ENCODE measurements at regions of chr16 and their contacts with region 1.

Region 1: DNA sequence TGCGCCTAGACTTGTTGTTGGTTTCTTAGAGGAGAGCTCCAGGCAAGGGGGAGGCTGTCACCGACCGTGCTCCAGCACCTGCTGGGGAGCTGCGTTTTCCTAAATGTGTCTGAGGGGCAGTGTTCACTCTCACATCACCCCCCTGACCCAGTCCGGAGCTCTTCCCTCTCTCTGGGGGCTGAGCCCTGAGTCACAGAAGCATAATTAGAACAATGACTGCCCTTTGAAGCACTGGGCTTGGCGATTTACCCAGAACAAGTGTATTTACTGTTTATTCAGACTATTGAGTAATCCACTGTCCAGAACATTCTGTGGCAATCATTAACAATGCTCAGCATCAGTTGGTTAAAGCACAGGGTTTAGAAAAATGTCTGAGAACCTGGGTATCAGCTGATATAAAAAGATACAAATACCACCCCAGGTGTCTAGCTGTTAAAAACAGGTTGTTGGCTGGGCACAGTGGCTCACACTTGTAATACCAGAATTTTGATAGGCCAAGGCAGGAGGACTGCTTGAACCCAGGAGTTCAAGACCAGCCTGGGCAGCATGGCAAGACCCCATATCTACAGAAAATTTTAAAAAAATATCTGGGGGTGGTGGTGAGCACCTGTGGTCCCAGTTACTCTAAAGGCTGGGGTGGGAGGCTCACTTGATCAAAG is 8.1 kb downstream of the CES4A start:
- DNase-seq: no peak
- H3K4me3 Mint-ChIP-seq: no peak overlapping the region
- H3K27ac Mint-ChIP-seq: no peak overlapping the region
- H3K4me1 Mint-ChIP-seq: peaks cover 24% of the 10 kb centered on the region
- H3K27me3 Mint-ChIP-seq: no peaks in the 10 kb centered on the region

Region 2: GRCh38 chr16:66539623-66540469 is 456.6 kb before region 1 on chr16:
- CTCF ChIA-PET with region 1: no interaction called
- POLR2A ChIA-PET with region 1: no interaction called
- DNase-seq: no peak
- H3K4me3 Mint-ChIP-seq: no peak overlapping the region
- H3K27ac Mint-ChIP-seq: peak overlapping the region; percentile 15
- H3K4me1 Mint-ChIP-seq: peaks cover 20% of the 10 kb centered on the region
- H3K27me3 Mint-ChIP-seq: no peaks in the 10 kb centered on the region

Region 3: GRCh38 chr16:66934153-66934838 is 62.2 kb before region 1 on chr16 and contains the start of gene CIAO2B:
- CTCF ChIA-PET with region 1: no interaction called
- POLR2A ChIA-PET with region 1: no interaction called
- DNase-seq: peak; percentile 89
- H3K4me3 Mint-ChIP-seq: peak within 1 kb of the TSS; percentile 99
- H3K27ac Mint-ChIP-seq: peak within 1 kb of the TSS; percentile 97
- H3K4me1 Mint-ChIP-seq: peaks cover 54% of the 10 kb centered on the region
- H3K27me3 Mint-ChIP-seq: no peaks in the 10 kb centered on the region
- total RNA-seq, gene CIAO2B: 95.2 to 112 TPM

Region 4: DNA sequence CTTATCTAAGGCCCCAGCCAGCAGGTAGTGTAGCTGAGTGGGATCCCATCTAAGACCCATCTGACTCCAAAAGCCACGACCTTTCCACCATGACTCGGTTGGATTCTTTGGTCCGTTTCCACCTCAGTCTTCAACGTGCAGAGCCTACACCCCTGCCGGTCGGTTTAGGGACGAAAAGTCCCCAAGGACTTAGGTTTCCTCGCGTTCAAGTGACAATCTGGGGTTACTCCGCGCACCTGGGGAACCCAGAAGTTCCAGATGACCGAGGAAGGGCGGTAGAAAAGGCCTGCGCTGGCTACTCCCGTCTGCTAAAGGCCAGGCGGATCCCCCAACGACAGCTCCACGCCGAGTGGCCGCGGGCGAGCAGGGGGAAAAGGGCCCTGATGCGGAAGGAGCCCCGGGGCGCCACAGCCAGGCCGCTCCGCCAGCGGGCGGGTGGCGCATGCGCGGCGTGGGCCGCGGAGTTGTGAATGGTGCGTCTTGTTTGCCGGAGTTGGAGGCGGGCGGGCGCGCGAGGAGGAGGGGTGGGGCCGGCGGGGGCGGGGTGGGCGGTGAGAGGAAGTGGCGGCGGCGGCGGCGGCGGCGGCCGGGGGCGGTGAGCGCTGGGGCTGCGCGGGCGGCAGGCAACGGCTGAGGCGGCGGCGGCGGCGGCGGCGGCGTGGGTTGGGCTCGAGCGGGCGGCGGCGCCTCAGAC is 32.2 kb after region 1 on chr16 and contains the start of gene CBFB:
- CTCF ChIA-PET with region 1: interaction called, 11 read pairs
- POLR2A ChIA-PET with region 1: no interaction called
- DNase-seq: peak; percentile 94
- H3K4me3 Mint-ChIP-seq: peak within 1 kb of the TSS; percentile 92
- H3K27ac Mint-ChIP-seq: peak within 1 kb of the TSS; percentile 94
- H3K4me1 Mint-ChIP-seq: peaks cover 58% of the 10 kb centered on the region
- H3K27me3 Mint-ChIP-seq: no peaks in the 10 kb centered on the region
- total RNA-seq, gene CBFB: 218 to 222 TPM